ENCODE measurements at regions of chr18 and their contacts with region 1.

Region 1: DNA sequence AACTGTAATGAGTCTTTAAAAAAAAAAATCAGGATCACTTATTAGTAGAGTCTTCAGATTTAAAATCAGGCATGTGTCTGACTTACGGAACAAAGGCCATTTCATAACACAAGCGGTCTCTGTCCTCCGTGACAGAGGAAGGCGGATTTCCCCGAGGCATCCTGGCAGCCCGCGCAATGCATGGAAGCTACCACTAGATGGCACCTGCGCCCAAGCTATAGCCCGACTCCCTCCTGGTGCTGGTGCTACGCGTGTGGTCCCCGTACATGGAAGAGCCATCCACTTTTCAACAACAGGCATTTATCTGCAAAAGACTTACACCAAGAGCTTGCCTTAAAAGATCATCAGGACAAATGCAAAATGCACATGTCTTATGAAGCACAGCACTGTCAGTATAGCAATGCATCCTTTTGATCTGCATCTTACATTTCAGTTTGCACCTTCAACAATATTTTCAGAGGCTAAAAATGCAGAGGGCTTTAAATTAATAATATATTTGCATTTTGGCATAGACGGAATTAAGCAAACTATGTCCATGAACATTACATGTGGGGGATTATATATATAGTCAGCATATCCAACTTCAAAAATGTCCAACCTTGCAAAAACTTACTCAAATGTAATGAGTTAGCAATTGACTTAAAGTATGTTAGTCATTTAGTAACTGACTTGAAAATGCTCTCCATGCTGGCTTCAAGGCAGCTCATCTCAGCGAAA is 96.0 kb downstream of the ZNF516 start:
- DNase-seq: peak; percentile 86
- ATAC-seq: peak; percentile 91

Region 2: GRCh38 chr18:76524900-76525698 is 126.0 kb after region 1 on chr18:
- intact Hi-C with region 1: no loop called
- DNase-seq: no peak
- ATAC-seq: peak; percentile 64 to 67

Region 3: DNA sequence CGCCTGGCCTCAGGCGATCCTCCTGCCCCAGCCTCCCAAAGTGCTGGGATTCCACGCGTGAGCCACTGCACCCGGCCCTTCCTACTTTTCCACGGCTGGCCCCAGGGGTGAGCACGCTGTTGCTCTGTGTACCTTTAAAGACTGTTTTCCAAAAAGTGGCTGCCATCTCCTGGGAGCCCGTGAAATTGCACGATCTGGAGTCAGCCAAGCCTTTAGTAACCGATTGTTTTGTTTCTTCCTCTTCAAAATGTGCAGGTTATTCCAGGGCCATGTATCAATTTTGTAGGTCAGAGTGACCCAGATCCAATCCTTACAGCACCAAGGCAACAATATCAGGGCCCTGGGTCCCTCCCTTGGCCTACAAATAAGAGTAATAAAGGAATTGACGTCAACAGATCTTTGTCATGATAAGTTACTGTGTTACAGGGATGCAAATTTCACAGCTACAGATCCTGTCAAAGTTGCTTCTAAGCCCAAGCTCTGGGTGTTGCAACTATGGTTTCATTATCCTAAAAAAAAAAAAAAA is 287.7 kb after region 1 on chr18:
- intact Hi-C with region 1: loop called (anchors 2 to 5 kb)
- DNase-seq: peak; percentile 65
- ATAC-seq: peak; percentile 89 to 94

Region 4: DNA sequence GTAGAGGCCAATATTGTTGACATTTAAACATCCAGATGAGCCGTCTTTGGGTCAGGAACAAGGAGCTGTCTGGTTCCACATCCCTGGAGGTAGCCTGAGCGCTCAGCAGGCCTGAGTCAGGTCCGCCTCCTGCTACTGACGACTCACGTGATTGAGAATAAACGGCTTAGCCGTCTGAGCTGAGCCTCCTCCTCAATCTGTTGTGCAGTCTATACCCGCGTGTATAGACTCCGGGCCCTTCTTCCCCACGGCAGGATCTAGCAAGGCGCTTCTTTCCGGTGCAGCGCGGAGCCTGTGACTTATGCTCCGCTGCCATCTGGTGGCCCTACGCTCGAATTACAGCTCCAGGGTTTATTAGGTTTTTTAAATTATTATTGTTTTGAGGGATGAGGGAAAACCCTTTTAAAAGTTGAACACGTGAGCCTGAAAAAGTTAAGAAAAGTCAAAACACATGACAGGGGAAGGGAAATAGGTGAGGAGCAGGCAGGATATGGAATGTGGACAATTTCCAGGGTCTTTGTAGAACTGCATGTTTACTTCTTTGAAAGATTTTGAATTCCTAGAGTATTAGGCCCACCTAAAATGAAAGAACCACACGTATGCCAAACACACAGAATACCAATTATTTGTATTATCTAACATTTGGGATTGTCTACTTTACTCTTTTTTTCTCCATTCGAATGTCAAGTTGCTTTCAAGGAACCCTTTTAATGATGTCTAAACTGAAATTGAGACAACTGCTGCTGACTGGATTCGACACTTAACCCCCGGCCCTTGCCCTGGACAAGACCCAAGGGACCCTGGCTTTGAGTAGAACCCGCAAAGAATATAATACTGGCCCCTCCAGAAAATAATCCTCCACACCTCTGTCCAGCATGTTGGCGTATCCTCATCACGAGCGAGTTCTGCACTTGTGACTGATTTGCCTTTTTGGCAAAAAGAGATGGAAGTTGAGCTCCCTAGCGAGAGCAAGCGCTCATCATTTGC is 310.9 kb after region 1 on chr18:
- intact Hi-C with region 1: loop called (anchors 2 to 5 kb)
- DNase-seq: peak; percentile 73
- ATAC-seq: peak; percentile 84 to 92